H1 (cell line): ENCODE measurements at regions of chr19 and their contacts with region 1.

Region 1: GRCh38 chr19:57651654-57651996 is 17.1 kb upstream of the ZSCAN4 start:
- DNase-seq: peak in 1 of 2 experiments; percentile 46
- H3K4me3 ChIP-seq: no peak overlapping the region
- H3K27ac ChIP-seq: no peak overlapping the region
- H3K4me1 ChIP-seq: peaks cover 0 to 2% (median 0%) of the 10 kb centered on the region in 4 experiments; a peak in 1 of 7 replicates
- H3K27me3 ChIP-seq: peaks cover 0 to 2% (median 0%) of the 10 kb centered on the region in 4 experiments; a peak in 1 of 7 replicates
- CTCF ChIP-seq: peak in 2 of 3 experiments; percentile 27 to 47; a peak in 2 of 4 replicates
- EP300 ChIP-seq: no peak
- POLR2A ChIP-seq: no peak
- RAD21 ChIP-seq: peak in 1 of 2 experiments; percentile 19; a peak in 2 of 4 replicates

Region 2: DNA sequence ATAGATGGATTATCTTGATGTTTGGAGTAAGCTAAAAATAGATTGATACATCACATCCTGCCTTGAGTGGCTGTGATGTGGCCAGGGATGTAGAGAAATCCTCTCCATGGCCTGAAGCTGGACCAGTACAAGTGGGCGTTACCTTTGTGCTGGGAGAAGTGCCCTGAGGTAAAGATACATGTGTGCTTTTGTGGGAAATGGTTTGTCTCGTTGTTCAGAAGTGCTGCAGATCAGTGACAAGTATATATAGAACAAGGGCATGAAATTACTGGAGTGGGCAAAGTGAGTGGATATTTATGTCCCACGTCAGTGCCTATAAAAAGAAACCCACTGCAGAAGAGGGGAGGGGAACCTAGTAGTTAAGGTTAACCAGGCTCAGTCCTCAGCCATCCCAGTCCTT is 312.7 kb before region 1 on chr19:
- CTCF ChIA-PET with region 1: no interaction called
- POLR2A ChIA-PET with region 1: no interaction called
- DNase-seq: no peak
- H3K4me3 ChIP-seq: no peak overlapping the region
- H3K27ac ChIP-seq: no peak overlapping the region
- H3K4me1 ChIP-seq: no peaks in the 10 kb centered on the region
- H3K27me3 ChIP-seq: no peaks in the 10 kb centered on the region
- CTCF ChIP-seq: no peak
- EP300 ChIP-seq: no peak
- POLR2A ChIP-seq: no peak
- RAD21 ChIP-seq: no peak

Region 3: GRCh38 chr19:57566396-57567265 is 85.0 kb before region 1 on chr19:
- CTCF ChIA-PET with region 1: no interaction called
- POLR2A ChIA-PET with region 1: no interaction called
- DNase-seq: no peak
- H3K4me3 ChIP-seq: no peak overlapping the region
- H3K27ac ChIP-seq: no peak overlapping the region
- H3K4me1 ChIP-seq: no peaks in the 10 kb centered on the region
- H3K27me3 ChIP-seq: no peaks in the 10 kb centered on the region
- CTCF ChIP-seq: no peak
- EP300 ChIP-seq: no peak
- POLR2A ChIP-seq: no peak
- RAD21 ChIP-seq: peak; percentile 36 to 37; a peak in 2 of 4 replicates

Region 4: GRCh38 chr19:57664269-57665127 is 12.9 kb after region 1 on chr19:
- CTCF ChIA-PET with region 1: interaction called, 14 read pairs
- POLR2A ChIA-PET with region 1: interaction called, 15 read pairs
- DNase-seq: peak in 1 of 2 experiments; percentile 83
- H3K4me3 ChIP-seq: peak overlapping the region; percentile 40 to 72 (median 56)
- H3K27ac ChIP-seq: no peak overlapping the region
- H3K4me1 ChIP-seq: peaks cover 2 to 5% (median 4%) of the 10 kb centered on the region in 4 experiments
- H3K27me3 ChIP-seq: no peaks in the 10 kb centered on the region; a peak in 4 of 7 replicates
- CTCF ChIP-seq: no peak
- EP300 ChIP-seq: no peak
- POLR2A ChIP-seq: peak; percentile 63 to 81
- RAD21 ChIP-seq: no peak